ENCODE measurements at regions of chr2 and their contacts with region 1.

Region 1: GRCh38 chr2:29196792-29197788 is 81.9 kb downstream of the CLIP4 start:
- DNase-seq: peak; percentile 38
- H3K4me3 ChIP-seq: no peak overlapping the region
- H3K27ac ChIP-seq: no peak overlapping the region
- H3K4me1 ChIP-seq: no peaks in the 10 kb centered on the region
- H3K27me3 ChIP-seq: no peaks in the 10 kb centered on the region
- CTCF ChIP-seq: peak; percentile 72 to 98 (median 85)

Region 2: GRCh38 chr2:29063646-29064343 is 133.3 kb before region 1 on chr2:
- dilution Hi-C with region 1: loop called (anchors 25 kb)
- DNase-seq: no peak
- H3K4me3 ChIP-seq: no peak overlapping the region
- H3K27ac ChIP-seq: no peak overlapping the region
- H3K4me1 ChIP-seq: peaks cover 54% of the 10 kb centered on the region
- H3K27me3 ChIP-seq: no peaks in the 10 kb centered on the region
- CTCF ChIP-seq: no peak

Measured in keratinocyte (primary cell).